Activated CD4-positive, alpha-beta memory T cell treated with anti-CD3 and anti-CD28 coated beads for 36 hours (primary cell): ENCODE measurements at regions of chr1 and their contacts with region 1.

Region 1: GRCh38 chr1:11248155-11248554 is 14.2 kb downstream of the MTOR start:
- DNase-seq: no peak
- H3K4me3 Mint-ChIP-seq: no peak overlapping the region
- H3K27ac Mint-ChIP-seq: no peak overlapping the region
- H3K4me1 Mint-ChIP-seq: peaks cover 14% of the 10 kb centered on the region
- H3K27me3 Mint-ChIP-seq: no peaks in the 10 kb centered on the region

Region 2: DNA sequence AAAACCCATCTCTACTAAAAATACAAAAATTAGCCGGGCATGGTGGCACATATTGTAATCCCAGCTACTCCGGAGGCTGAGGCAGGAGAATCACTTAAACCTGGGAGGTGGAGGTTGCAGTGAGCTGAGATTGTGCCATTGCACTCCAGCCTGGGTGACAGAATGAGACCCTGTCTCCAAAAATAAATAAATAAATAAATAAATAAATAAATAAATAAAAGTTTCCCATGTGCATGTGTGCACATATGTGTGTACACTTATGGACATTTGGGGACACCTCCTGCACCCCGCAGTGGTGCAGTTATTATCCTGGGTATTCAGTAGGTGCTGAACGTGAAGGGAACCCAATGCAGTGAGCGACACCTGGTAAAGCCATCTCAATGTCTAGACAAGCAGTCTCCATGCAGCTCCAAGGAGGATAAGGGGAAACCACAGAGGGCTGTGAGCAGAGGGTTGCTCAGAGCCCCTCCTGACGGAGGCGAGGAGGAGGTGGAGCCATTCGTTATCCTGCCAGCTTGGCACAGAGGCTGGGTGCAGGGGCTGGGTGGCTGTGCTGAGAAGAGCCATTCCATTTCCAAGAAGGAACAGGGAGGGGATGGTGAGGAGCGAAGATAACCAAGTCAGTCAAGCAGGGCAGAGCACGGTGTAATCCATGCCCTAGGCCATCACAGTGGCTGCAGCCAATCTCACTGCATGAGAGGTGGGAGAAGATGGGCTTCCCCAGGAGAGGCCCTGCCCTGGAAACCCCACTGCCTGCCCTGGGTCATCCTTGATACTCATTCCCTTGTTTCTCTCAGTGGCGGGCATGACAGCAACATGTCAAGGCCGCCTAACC is 50.5 kb after region 1 on chr1:
- CTCF ChIA-PET with region 1: no interaction called
- POLR2A ChIA-PET with region 1: no interaction called
- intact Hi-C with region 1: loop called (anchors 5 kb)
- DNase-seq: no peak
- H3K4me3 Mint-ChIP-seq: no peak overlapping the region
- H3K27ac Mint-ChIP-seq: peak overlapping the region; percentile 81
- H3K4me1 Mint-ChIP-seq: peaks cover 36% of the 10 kb centered on the region
- H3K27me3 Mint-ChIP-seq: no peaks in the 10 kb centered on the region

Region 3: DNA sequence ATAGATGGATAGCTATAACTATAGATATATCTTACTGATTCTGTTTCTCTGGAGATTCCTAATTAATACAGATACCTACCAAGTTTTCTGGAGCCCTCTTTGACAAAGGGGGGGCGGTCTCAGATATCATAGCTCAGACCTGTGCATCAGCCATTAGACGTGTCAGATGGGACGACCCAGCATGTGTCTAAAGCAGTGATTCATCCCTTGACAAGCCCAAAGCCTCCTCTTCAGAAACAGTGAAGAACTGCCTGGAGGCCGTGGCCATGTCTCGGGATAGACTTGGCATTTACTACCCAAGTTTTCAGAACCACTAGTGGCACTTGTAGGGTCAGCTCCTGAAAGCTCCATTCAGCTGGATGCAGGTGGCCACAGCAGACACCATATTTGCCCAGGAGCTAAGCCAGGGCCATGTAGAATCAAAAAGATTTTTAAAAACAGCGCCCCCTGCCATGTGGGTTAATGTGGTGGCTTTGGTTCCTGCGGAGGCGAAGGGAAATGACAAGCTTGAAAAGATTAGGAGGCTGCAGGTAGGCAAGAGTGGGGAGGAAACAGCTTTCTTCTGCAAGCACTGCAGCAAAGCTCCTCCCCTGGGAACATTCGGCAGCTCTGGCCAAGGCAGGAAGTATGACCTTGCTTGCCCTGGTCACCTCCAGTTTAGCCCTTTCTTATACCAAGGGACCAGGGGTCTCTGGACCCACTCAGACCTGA is 323.9 kb after region 1 on chr1:
- CTCF ChIA-PET with region 1: no interaction called
- POLR2A ChIA-PET with region 1: no interaction called
- intact Hi-C with region 1: no loop called
- DNase-seq: peak; percentile 35
- H3K4me3 Mint-ChIP-seq: no peak overlapping the region
- H3K27ac Mint-ChIP-seq: no peak overlapping the region
- H3K4me1 Mint-ChIP-seq: no peaks in the 10 kb centered on the region
- H3K27me3 Mint-ChIP-seq: peaks cover 17% of the 10 kb centered on the region